HEK293 (cell line): ENCODE measurements at regions of chr6 and their contacts with region 1.

Region 1: DNA sequence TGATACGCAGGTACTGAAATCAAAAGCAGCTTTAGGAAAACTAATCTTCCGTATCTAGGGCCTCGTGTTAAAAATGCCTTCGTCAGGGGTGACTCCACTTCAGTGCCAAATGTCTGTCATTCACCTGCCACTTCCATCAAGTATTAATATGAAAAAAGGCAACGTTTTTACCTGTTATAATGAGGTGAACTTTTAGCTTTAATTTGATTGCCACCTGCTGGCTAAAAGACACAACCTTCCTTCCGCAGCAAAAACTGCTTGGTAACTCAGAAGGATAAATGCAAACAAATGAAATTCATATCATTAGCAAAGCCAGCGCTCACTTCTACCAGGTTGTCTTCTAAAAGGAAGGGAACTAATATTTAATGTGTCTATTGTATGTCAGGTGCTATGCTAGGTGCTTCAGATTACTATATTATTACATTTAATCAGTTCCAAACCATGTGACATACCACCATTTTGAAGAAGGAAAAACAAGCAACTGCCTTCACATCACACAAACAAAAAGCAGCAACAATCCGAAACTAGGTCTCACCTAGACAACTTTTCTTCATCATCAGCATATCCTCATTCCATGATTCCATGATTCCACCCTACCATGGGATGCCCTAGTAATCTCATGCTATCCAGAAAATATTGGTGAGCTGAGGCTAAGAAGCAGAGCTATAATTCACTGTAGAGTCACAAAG is 20.6 kb upstream of the ARHGAP18 start:
- H3K4me3 ChIP-seq: no peak overlapping the region
- H3K27ac ChIP-seq: no peak overlapping the region
- H3K4me1 ChIP-seq: no peaks in the 10 kb centered on the region
- CTCF ChIP-seq: 0 out of 2 replicates have a peak, but pooled peaks have one; percentile 32

Region 2: GRCh38 chr6:129498950-129499842 is 231.4 kb before region 1 on chr6:
- CTCF ChIA-PET with region 1: interaction called, 48 read pairs
- POLR2A ChIA-PET with region 1: no interaction called
- H3K4me3 ChIP-seq: no peak overlapping the region
- H3K27ac ChIP-seq: no peak overlapping the region
- H3K4me1 ChIP-seq: peaks cover 3% of the 10 kb centered on the region; the same call in 1 of the 2 replicates
- CTCF ChIP-seq: peak; percentile 30; the same call in 1 of the 2 replicates

Region 3: DNA sequence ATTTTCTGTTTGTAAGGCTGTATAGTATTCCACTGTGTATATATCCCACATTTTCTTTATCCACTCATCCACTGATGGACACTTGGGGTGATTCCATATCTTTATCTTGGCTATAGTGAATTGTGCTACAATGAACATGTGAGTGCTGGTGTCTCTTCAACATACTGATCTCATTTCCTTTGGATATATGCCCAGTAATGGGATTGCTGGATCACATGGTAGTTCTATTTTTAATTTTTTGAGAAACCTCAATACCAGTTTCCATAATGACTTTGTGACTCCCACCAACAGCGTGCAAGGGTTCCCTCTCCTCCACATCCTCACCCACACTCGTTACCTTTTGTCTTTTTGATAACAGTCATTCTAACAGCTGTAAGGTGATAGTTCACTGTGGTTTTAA is 186.6 kb before region 1 on chr6:
- CTCF ChIA-PET with region 1: no interaction called
- POLR2A ChIA-PET with region 1: no interaction called
- H3K4me3 ChIP-seq: no peak overlapping the region
- H3K27ac ChIP-seq: no peak overlapping the region
- H3K4me1 ChIP-seq: no peaks in the 10 kb centered on the region
- CTCF ChIP-seq: no peak

Region 4: DNA sequence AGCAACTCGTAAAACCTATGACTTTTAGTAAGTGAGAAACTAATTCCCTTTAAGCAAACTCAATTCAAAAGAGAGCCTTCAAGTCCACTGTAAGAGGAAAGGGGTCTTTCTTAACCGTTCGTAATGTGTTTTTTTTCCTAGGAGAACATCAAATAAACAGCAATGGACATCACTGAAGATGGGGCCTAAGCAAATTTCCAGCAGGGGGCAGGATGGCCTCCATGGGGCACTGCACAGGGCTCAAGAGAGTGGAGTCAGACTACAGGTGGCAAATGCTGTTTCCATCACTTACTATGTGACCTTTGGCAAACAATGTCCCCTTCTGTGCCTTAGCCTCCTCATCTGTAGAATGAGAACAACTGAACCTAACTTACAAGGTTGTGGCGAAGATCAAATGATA is 109.4 kb before region 1 on chr6:
- CTCF ChIA-PET with region 1: interaction called, 12 read pairs
- POLR2A ChIA-PET with region 1: no interaction called
- H3K4me3 ChIP-seq: no peak overlapping the region
- H3K27ac ChIP-seq: no peak overlapping the region
- H3K4me1 ChIP-seq: no peaks in the 10 kb centered on the region; the same call in 1 of the 2 replicates
- CTCF ChIP-seq: no peak

Region 5: GRCh38 chr6:129717277-129717676 is 13.3 kb before region 1 on chr6:
- CTCF ChIA-PET with region 1: interaction called, 18 read pairs
- POLR2A ChIA-PET with region 1: no interaction called
- H3K4me3 ChIP-seq: no peak overlapping the region
- H3K27ac ChIP-seq: no peak overlapping the region
- H3K4me1 ChIP-seq: no peaks in the 10 kb centered on the region
- CTCF ChIP-seq: no peak

Region 6: GRCh38 chr6:129748212-129748900 is 17.7 kb after region 1 on chr6:
- CTCF ChIA-PET with region 1: interaction called, 19 read pairs
- POLR2A ChIA-PET with region 1: no interaction called
- H3K4me3 ChIP-seq: no peak overlapping the region
- H3K27ac ChIP-seq: no peak overlapping the region
- H3K4me1 ChIP-seq: peaks cover 17% of the 10 kb centered on the region
- CTCF ChIP-seq: no peak

Region 7: DNA sequence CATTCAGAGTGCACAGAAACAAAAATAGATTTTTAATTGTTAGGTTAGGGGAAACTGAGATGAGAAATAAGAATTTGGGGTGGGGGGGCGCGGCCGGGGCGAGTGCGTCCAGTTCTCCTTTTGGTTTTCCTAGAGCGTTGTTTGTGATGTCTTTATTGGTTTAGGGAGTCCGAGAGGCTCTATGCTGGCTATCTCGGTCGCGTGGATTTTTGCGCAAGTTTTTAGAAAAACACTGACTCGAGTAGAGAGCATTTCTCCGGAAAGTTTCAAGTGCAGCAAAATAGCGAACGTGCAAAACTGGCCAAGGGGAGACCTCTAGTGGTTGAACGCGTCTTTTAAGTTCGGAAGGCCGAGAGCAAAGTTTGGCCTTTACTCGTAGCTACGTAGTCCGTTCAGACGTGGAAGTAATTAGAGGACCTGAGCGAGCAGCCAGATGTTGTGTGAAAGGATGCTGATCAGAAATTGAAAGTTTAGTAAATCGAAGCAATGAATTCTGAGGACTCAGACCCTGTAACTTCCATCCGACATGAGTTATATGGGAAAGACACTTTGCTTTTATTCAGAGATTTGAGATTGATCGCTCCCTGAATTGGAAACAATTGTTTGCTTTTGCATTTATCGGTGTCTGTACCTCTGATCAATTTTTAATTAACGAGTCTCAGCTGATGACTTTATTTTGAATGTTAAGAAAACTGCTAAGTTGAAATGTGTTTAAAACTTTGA is 290.4 kb after region 1 on chr6:
- CTCF ChIA-PET with region 1: interaction called, 10 read pairs
- POLR2A ChIA-PET with region 1: no interaction called
- H3K4me3 ChIP-seq: peak overlapping the region; percentile 70
- H3K27ac ChIP-seq: no peak overlapping the region
- H3K4me1 ChIP-seq: no peaks in the 10 kb centered on the region
- CTCF ChIP-seq: peak; percentile 73; the same call in 1 of the 2 replicates